Prostate gland (tissue), 2 donors: ENCODE measurements at regions of chr2 and their contacts with region 1.

Region 1: GRCh38 chr2:18520451-18521425 is 39.7 kb downstream of the RDH14 start:
- DNase-seq: peak; percentile 77
- H3K4me3 ChIP-seq: no peak overlapping the region
- H3K27ac ChIP-seq: no peak overlapping the region
- H3K4me1 ChIP-seq: no peaks in the 10 kb centered on the region
- H3K27me3 ChIP-seq: no peaks in the 10 kb centered on the region
- CTCF ChIP-seq: peak; percentile 82 to 89 (median 87)
- POLR2A ChIP-seq: no peak

Region 2: DNA sequence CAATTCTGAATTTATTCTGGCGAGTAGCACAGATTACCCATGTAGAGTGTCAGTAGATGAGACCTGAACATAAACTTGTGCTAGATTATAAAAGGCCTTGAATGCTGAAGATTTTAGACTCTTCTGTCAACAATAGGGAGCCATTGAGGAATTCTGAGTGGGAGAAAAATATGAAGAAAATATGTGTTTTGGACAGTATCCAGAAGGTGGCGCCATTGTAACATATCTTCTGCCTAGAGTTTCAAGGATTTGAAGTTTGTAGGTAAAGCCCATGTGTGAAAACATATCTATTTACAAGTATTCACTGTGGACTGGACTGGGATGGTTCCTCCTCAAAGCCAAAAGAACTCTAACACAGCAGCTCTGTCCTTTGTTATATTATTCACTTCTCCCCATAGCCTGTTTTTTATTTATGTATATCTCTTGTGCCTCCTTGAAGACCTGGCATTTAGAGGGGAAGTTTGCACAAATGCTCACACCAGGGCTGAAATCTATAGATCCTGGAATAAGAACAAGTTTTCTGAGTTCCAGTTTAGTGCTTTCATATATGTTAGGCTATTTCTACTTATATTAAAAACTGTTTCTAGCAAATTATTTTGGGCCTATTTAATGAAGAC is 85.2 kb before region 1 on chr2:
- intact Hi-C with region 1: loop called (anchors 5 kb)
- DNase-seq: peak; percentile 17
- H3K4me3 ChIP-seq: no peak overlapping the region
- H3K27ac ChIP-seq: no peak overlapping the region
- H3K4me1 ChIP-seq: no peaks in the 10 kb centered on the region
- H3K27me3 ChIP-seq: no peaks in the 10 kb centered on the region
- CTCF ChIP-seq: peak; percentile 40 to 65 (median 50)
- POLR2A ChIP-seq: no peak

Region 3: DNA sequence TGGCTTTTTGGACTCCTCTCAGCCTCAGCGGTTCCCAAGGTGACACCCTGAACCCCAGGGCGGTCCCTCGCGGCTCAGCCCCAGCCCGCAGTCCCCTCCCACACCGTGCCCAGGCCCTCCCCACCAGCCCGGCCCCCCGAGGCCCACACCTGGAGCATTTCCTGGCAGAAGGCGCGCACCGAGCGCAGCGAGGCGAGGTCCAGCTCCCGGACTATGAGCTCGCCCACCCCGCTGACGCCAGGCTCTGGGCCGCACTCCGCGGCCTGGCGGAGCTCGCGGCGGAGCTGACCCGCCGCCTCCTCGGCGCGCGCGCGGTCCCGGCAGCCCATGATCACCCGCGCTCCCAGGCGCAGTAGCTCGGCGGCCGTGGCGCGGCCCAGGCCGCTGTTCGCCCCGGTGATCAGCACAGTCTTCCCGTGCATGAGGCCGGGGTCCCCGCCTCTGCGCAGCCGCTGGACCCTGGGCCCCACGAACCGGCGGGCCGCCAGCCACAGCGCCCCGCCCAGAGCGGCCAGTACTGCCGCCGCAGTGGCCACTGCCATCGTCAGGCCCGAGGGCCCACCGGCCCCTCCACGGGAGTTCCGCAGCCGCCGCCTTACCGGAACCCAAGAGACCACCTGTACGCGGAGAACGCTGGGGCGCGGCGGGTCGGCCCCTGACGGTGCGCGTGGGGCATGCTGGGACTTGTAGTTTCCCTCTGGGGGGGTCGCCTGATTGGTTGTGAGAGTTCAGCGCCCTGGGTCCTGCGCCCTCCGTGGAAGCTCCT is 39.5 kb after region 1 on chr2 and contains the start of gene RDH14:
- intact Hi-C with region 1: loop called (anchors 2 kb)
- DNase-seq: peak; percentile 93
- H3K4me3 ChIP-seq: peak within 1 kb of the TSS; percentile 73 to 90
- H3K27ac ChIP-seq: peak within 1 kb of the TSS; percentile 95 to 96
- H3K4me1 ChIP-seq: peaks cover 2% of the 10 kb centered on the region
- H3K27me3 ChIP-seq: no peaks in the 10 kb centered on the region
- CTCF ChIP-seq: peak in 2 of 4 experiments; percentile 12 to 17
- POLR2A ChIP-seq: peak; percentile 47
- total RNA-seq, gene RDH14: 29.5 to 42.5 TPM

Region 4: GRCh38 chr2:18623782-18624181 is 103.0 kb after region 1 on chr2:
- intact Hi-C with region 1: no loop called
- DNase-seq: no peak
- H3K4me3 ChIP-seq: no peak overlapping the region
- H3K27ac ChIP-seq: no peak overlapping the region
- H3K4me1 ChIP-seq: no peaks in the 10 kb centered on the region
- H3K27me3 ChIP-seq: no peaks in the 10 kb centered on the region
- CTCF ChIP-seq: no peak
- POLR2A ChIP-seq: no peak

Region 5: DNA sequence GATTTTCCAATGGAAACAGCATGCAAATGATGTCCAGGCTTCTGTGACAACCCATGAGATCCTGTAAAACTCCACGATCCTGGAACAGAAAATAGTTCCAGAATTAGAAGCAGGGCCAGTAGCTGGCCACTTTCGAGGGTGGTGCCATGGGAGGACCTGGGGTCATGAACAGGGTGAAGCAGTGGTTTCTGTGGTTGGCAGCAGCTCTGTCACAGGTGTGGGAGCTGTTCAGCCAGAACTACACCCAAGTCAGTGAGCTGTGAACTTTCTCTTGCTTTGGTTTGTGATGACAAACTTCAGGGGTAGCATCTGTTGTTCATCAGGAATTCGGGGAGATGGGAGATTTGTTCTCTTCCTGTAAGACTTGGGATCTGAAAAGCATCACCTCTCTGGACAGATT is 383.0 kb after region 1 on chr2:
- intact Hi-C with region 1: loop called (anchors 10 kb)
- DNase-seq: no peak
- H3K4me3 ChIP-seq: no peak overlapping the region
- H3K27ac ChIP-seq: no peak overlapping the region
- H3K4me1 ChIP-seq: no peaks in the 10 kb centered on the region
- H3K27me3 ChIP-seq: no peaks in the 10 kb centered on the region
- CTCF ChIP-seq: no peak
- POLR2A ChIP-seq: no peak

Region 6: GRCh38 chr2:19362755-19363473 is 842.2 kb after region 1 on chr2:
- intact Hi-C with region 1: loop called (anchors 2 kb)
- DNase-seq: peak; percentile 81
- H3K4me3 ChIP-seq: peak overlapping the region; percentile 41 to 44
- H3K27ac ChIP-seq: peak overlapping the region; percentile 51 to 54
- H3K4me1 ChIP-seq: no peaks in the 10 kb centered on the region
- H3K27me3 ChIP-seq: no peaks in the 10 kb centered on the region
- CTCF ChIP-seq: peak; percentile 78 to 93 (median 82)
- POLR2A ChIP-seq: no peak

Region 7: DNA sequence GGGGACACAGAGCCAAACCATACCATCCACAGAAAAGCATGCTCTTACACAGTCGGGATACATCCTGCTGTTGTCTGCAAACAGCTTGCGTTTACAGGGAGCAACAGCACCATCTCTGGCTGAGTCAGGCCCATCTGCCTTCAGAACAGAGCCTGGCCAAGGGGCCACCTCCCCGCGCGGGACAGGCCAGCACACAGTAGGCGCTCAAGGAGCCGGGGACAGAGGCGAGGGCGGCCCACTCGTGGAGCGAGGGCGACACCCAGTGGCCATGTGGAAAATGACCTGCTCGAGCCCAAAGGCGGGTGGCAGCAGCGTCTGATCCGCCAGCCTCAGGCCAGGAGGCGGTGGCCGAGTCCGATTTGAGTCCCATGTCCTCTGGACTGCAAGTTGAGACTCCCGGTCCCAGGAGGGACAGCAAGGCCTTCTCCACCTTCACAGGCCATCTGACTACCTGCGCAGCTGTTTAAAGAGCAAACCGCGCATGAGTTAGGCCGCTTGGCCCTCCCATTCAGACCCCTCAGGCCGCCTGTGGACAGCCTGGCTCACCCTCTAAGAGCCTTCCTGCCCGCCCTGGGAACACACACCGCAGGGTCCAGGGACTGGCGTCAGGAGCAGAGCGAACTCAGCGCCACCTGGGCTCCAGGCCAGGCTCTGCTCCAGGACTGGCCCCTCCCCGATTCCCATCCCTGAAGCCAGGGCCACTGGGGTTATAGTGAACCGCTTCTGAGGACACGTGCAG is 1342.7 kb after region 1 on chr2:
- intact Hi-C with region 1: loop called (anchors 5 kb)
- DNase-seq: peak; percentile 44
- H3K4me3 ChIP-seq: no peak overlapping the region
- H3K27ac ChIP-seq: no peak overlapping the region
- H3K4me1 ChIP-seq: no peaks in the 10 kb centered on the region
- H3K27me3 ChIP-seq: no peaks in the 10 kb centered on the region
- CTCF ChIP-seq: peak; percentile 79 to 96 (median 92)
- POLR2A ChIP-seq: no peak